ENCODE measurements at regions of chr2 and their contacts with region 1.

Region 1: DNA sequence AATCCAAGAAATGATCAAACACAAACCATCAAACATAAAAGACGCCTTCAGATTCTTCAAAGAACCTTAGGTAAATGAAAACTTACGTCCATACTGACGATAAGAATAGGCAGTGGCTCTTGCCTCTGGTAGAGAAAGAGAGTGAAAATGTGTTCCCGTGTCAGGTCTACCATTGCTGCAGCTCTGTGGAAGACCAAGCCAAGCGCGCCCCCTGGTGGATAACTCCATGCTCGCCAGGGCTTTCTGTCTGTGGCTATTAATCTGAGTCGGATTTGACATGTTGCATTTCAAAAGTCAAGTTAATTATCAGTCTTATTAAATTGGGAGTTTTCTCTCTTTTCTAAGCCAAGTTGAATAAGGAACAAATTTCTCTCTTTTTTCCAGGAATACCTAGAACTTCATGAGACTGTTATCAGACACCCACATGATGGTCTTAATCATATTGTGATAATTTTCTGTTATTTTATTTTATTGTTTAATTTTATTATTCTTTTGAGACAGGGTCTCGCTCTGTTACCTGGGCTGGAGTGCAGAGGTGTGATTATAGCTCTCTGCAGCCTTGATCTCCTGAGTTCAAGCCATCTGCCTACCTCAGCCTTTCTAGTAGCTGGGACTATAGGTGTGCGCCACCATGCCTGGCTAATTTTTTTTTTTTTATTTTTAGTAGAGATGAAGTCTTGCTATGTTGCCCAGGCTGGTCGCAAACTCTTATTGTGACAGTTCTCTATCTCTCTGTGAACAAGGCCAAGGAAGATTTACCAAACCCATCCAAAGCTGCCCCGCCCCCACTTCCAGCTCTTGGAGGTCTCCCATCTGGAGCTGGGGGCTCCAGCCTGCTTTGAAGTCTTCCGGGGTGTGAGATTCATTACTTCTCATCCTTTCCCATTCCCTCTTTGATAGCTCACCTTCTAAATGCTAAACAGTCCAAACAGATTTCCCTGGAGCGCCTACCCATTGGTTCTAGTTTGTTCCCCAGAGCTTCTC is 15.8 kb upstream of the ZAP70 start:
- DNase-seq: peak; percentile 45
- ATAC-seq: peak; percentile 96
- H3K4me3 ChIP-seq: peak overlapping the region; percentile 25; the same call in 1 of the 2 replicates
- H3K27ac ChIP-seq: no peak overlapping the region
- H3K4me1 ChIP-seq: no peaks in the 10 kb centered on the region; the same call in 1 of the 2 replicates
- H3K27me3 ChIP-seq: no peaks in the 10 kb centered on the region
- CTCF ChIP-seq: peak; percentile 81 to 98 (median 88); a peak in 5 of 6 replicates
- EP300 ChIP-seq: no peak
- POLR2A ChIP-seq: no peak
- RAD21 ChIP-seq: peak; percentile 99

Region 2: GRCh38 chr2:97645695-97646629 is 51.6 kb before region 1 on chr2 and contains the start of gene COX5B:
- CTCF ChIA-PET with region 1: interaction called, 17 read pairs
- POLR2A ChIA-PET with region 1: interaction called, 5 read pairs
- RAD21 ChIA-PET with region 1: interaction called, 20 read pairs
- SMC1A ChIA-PET with region 1: interaction called, 22 read pairs
- in situ Hi-C with region 1: no loop called
- intact Hi-C with region 1: loop called (anchors 5 kb)
- DNase-seq: peak; percentile 89
- ATAC-seq: peak; percentile 97
- H3K4me3 ChIP-seq: peak within 1 kb of the TSS; percentile 99
- H3K27ac ChIP-seq: peak within 1 kb of the TSS; percentile 81
- H3K4me1 ChIP-seq: no peaks in the 10 kb centered on the region; the same call in 1 of the 2 replicates
- H3K27me3 ChIP-seq: no peaks in the 10 kb centered on the region
- CTCF ChIP-seq: no peak
- EP300 ChIP-seq: no peak
- POLR2A ChIP-seq: peak; percentile 97
- RAD21 ChIP-seq: no peak
- polyA plus RNA-seq, gene COX5B: 150 to 392 TPM

Region 3: GRCh38 chr2:97673182-97673914 is 24.2 kb before region 1 on chr2:
- CTCF ChIA-PET with region 1: interaction called, 17 read pairs
- POLR2A ChIA-PET with region 1: interaction called, 5 read pairs
- RAD21 ChIA-PET with region 1: interaction called, 22 read pairs
- SMC1A ChIA-PET with region 1: interaction called, 22 read pairs
- in situ Hi-C with region 1: no loop called
- intact Hi-C with region 1: no loop called
- DNase-seq: no peak
- ATAC-seq: no peak
- H3K4me3 ChIP-seq: no peak overlapping the region
- H3K27ac ChIP-seq: peak overlapping the region; percentile 36; the same call in 1 of the 2 replicates
- H3K4me1 ChIP-seq: peaks cover 9% of the 10 kb centered on the region
- H3K27me3 ChIP-seq: no peaks in the 10 kb centered on the region
- CTCF ChIP-seq: no peak
- EP300 ChIP-seq: no peak
- POLR2A ChIP-seq: no peak
- RAD21 ChIP-seq: no peak

Region 4: GRCh38 chr2:97718051-97718882 is 20.7 kb after region 1 on chr2:
- CTCF ChIA-PET with region 1: interaction called, 10 read pairs
- POLR2A ChIA-PET with region 1: no interaction called
- RAD21 ChIA-PET with region 1: no interaction called
- SMC1A ChIA-PET with region 1: no interaction called
- in situ Hi-C with region 1: no loop called
- intact Hi-C with region 1: no loop called
- DNase-seq: no peak
- ATAC-seq: peak; percentile 79
- H3K4me3 ChIP-seq: no peak overlapping the region; the same call in 1 of the 2 replicates
- H3K27ac ChIP-seq: no peak overlapping the region
- H3K4me1 ChIP-seq: peaks cover 11% of the 10 kb centered on the region; the same call in 1 of the 2 replicates
- H3K27me3 ChIP-seq: no peaks in the 10 kb centered on the region
- CTCF ChIP-seq: no peak
- EP300 ChIP-seq: no peak
- POLR2A ChIP-seq: peak; percentile 62
- RAD21 ChIP-seq: no peak

Region 5: DNA sequence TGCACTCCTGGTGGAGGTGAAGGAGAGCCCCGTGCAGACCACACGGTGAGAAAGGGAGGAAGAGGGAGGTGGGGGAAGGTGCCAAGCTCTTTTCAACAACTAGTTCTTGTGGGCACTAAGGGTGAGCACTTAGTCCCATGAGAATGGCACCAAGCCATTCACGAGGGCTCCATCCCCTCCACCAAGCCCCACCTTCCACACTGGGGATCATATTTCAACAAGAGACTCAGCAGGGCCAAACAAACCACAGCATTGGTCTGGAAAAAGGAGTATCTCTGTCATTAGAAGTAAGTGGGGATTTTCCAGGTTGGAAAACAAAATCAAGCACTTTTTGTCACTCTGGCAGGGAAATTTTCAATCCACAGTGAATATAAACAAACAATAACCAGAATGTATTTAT is 54.2 kb after region 1 on chr2:
- CTCF ChIA-PET with region 1: interaction called, 6 read pairs
- POLR2A ChIA-PET with region 1: no interaction called
- RAD21 ChIA-PET with region 1: no interaction called
- SMC1A ChIA-PET with region 1: interaction called, 4 read pairs
- in situ Hi-C with region 1: no loop called
- intact Hi-C with region 1: loop called (anchors 2 kb)
- DNase-seq: no peak
- ATAC-seq: no peak
- H3K4me3 ChIP-seq: no peak overlapping the region
- H3K27ac ChIP-seq: no peak overlapping the region
- H3K4me1 ChIP-seq: no peaks in the 10 kb centered on the region; the same call in 1 of the 2 replicates
- H3K27me3 ChIP-seq: no peaks in the 10 kb centered on the region
- CTCF ChIP-seq: no peak
- EP300 ChIP-seq: no peak
- POLR2A ChIP-seq: no peak
- RAD21 ChIP-seq: no peak

Region 6: DNA sequence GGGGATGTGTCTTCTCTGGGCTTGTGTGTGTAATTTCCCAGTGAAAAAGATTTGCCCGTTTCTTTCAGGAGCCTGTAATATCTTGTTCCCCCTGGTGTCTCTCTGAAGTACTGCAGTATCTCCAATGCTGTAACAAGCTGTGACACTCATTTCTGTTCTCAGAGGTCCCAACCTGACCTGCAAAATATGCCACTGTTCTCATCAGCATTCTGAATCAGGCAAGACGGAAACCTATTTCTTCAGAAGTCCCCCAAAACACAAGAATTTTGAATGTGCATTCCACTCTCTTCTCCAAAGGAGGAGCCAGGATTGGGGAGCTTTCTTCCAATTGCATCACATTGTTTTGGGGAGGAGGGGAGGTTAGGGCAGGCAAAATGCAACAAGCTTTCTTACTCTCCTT is 571.7 kb after region 1 on chr2:
- CTCF ChIA-PET with region 1: interaction called, 20 read pairs
- POLR2A ChIA-PET with region 1: no interaction called
- RAD21 ChIA-PET with region 1: no interaction called
- SMC1A ChIA-PET with region 1: interaction called, 17 read pairs
- in situ Hi-C with region 1: no loop called
- intact Hi-C with region 1: no loop called
- DNase-seq: no peak
- ATAC-seq: peak; percentile 91
- H3K4me3 ChIP-seq: no peak overlapping the region
- H3K27ac ChIP-seq: no peak overlapping the region
- H3K4me1 ChIP-seq: no peaks in the 10 kb centered on the region
- H3K27me3 ChIP-seq: no peaks in the 10 kb centered on the region; a peak in 1 of 4 replicates
- CTCF ChIP-seq: peak; percentile 54 to 76 (median 66)
- EP300 ChIP-seq: no peak
- POLR2A ChIP-seq: no peak
- RAD21 ChIP-seq: peak; percentile 78

Measured in GM12878 (cell line).